Activated B cell treated with CpG ODN at 0.5 μM for 24 hours (primary cell): ENCODE measurements at regions of chr1 and their contacts with region 1.

Region 1: GRCh38 chr1:200620273-200621131 is at the start of gene KIF14:
- DNase-seq: peak; percentile 85
- ATAC-seq: peak; percentile 99
- H3K4me3 Mint-ChIP-seq: peak within 1 kb of the TSS; percentile 94
- H3K27ac Mint-ChIP-seq: peak within 1 kb of the TSS; percentile 88
- H3K4me1 Mint-ChIP-seq: peaks cover 11% of the 10 kb centered on the region
- H3K27me3 Mint-ChIP-seq: no peaks in the 10 kb centered on the region
- CTCF ChIP-seq: no peak
- total RNA-seq, gene KIF14: 0.27 and 0.38 TPM in 2 replicates

Region 2: DNA sequence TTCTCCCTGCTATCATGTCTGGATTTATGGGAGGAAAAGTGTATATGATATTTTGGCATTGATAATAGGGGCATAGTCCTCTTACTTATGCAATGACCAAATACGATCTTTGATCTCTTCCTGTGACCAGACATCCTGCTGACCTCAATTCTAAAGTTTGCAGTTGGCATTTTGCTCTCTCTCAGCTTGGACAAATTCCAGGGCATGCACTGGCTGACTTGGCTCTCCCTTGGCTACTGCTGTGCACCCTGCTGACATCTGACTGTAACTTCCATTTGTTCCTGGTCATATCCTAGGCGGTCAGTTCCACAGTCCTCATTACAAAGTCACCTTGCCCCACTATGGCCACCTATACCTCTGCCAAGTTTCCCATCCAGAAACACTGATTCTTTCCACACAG is 973.7 kb before region 1 on chr1:
- CTCF ChIA-PET with region 1: no interaction called
- POLR2A ChIA-PET with region 1: no interaction called
- intact Hi-C with region 1: no loop called
- DNase-seq: no peak
- ATAC-seq: no peak
- H3K4me3 Mint-ChIP-seq: no peak overlapping the region
- H3K27ac Mint-ChIP-seq: no peak overlapping the region
- H3K4me1 Mint-ChIP-seq: no peaks in the 10 kb centered on the region
- H3K27me3 Mint-ChIP-seq: peaks cover 1% of the 10 kb centered on the region
- CTCF ChIP-seq: no peak

Region 3: GRCh38 chr1:200409761-200410565 is 210.5 kb before region 1 on chr1 and contains the start of gene ZNF281:
- CTCF ChIA-PET with region 1: no interaction called
- POLR2A ChIA-PET with region 1: no interaction called
- intact Hi-C with region 1: loop called (anchors 1 kb)
- DNase-seq: peak; percentile 93
- ATAC-seq: peak; percentile 96
- H3K4me3 Mint-ChIP-seq: peak within 1 kb of the TSS; percentile 97
- H3K27ac Mint-ChIP-seq: peak within 1 kb of the TSS; percentile 95
- H3K4me1 Mint-ChIP-seq: peaks cover 51% of the 10 kb centered on the region
- H3K27me3 Mint-ChIP-seq: no peaks in the 10 kb centered on the region
- CTCF ChIP-seq: no peak
- total RNA-seq, gene ZNF281: 28.2 and 31.2 TPM in 2 replicates

Region 4: GRCh38 chr1:200669314-200670241 is 49.1 kb after region 1 on chr1 and contains the start of gene DDX59:
- CTCF ChIA-PET with region 1: interaction called, 25 read pairs
- POLR2A ChIA-PET with region 1: interaction called, 14 read pairs
- intact Hi-C with region 1: loop called (anchors 1 kb)
- DNase-seq: peak; percentile 87
- ATAC-seq: peak; percentile 84
- H3K4me3 Mint-ChIP-seq: peak within 1 kb of the TSS; percentile 97
- H3K27ac Mint-ChIP-seq: peak within 1 kb of the TSS; percentile 96
- H3K4me1 Mint-ChIP-seq: peaks cover 30% of the 10 kb centered on the region
- H3K27me3 Mint-ChIP-seq: no peaks in the 10 kb centered on the region
- CTCF ChIP-seq: no peak
- total RNA-seq, gene DDX59: 27.6 and 28.2 TPM in 2 replicates

Region 5: GRCh38 chr1:200802865-200803512 is 182.5 kb after region 1 on chr1:
- CTCF ChIA-PET with region 1: interaction called, 135 read pairs
- POLR2A ChIA-PET with region 1: no interaction called
- intact Hi-C with region 1: loop called (anchors 1 kb)
- DNase-seq: peak; percentile 26
- ATAC-seq: peak; percentile 81
- H3K4me3 Mint-ChIP-seq: no peak overlapping the region
- H3K27ac Mint-ChIP-seq: no peak overlapping the region
- H3K4me1 Mint-ChIP-seq: no peaks in the 10 kb centered on the region
- H3K27me3 Mint-ChIP-seq: peaks cover 10% of the 10 kb centered on the region
- CTCF ChIP-seq: peak; percentile 61

Region 6: GRCh38 chr1:200837931-200838571 is 217.5 kb after region 1 on chr1:
- CTCF ChIA-PET with region 1: interaction called, 14 read pairs
- POLR2A ChIA-PET with region 1: no interaction called
- intact Hi-C with region 1: loop called (anchors 1 kb)
- DNase-seq: no peak
- ATAC-seq: no peak
- H3K4me3 Mint-ChIP-seq: no peak overlapping the region
- H3K27ac Mint-ChIP-seq: no peak overlapping the region
- H3K4me1 Mint-ChIP-seq: no peaks in the 10 kb centered on the region
- H3K27me3 Mint-ChIP-seq: no peaks in the 10 kb centered on the region
- CTCF ChIP-seq: no peak

Region 7: DNA sequence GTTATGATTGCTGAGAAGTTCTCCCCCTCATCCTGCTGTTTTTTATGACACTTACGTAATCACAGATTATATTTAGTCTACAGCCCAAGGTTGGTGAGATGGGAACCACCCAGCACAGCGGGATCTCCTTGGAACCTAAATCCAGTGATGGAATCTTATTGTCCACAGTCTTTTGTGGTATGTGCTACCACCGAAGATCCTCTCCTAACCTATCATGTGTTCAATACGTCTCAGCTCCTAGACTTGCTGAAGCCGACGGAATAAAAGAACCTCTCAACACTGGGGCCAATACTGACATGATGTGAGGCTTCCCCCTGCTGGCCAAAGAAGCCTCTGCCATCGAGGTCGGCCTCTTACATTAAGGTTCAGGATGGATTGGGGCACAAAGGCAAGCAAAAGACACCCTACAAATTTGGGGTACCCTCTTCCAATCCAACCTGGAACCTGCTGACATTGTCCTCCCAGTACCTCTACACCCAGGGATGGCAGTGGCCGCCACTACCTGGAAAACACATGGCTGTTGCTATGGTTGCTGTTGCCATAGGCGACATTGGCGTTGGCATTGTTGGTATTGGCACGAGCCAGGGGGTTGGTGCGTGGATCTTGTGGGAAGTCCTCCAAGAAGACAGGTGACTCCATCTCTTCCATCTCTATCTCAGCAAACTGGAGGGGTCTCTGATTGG is 422.4 kb after region 1 on chr1:
- CTCF ChIA-PET with region 1: no interaction called
- POLR2A ChIA-PET with region 1: no interaction called
- intact Hi-C with region 1: loop called (anchors 1 kb)
- DNase-seq: peak; percentile 47
- ATAC-seq: peak; percentile 93
- H3K4me3 Mint-ChIP-seq: no peak overlapping the region
- H3K27ac Mint-ChIP-seq: peak overlapping the region; percentile 35
- H3K4me1 Mint-ChIP-seq: peaks cover 2% of the 10 kb centered on the region
- H3K27me3 Mint-ChIP-seq: peaks cover 2% of the 10 kb centered on the region
- CTCF ChIP-seq: peak; percentile 70